Activated naive CD4-positive, alpha-beta T cell treated with anti-CD3 and anti-CD28 coated beads for 36 hours (primary cell): ENCODE measurements at regions of chr17 and their contacts with region 1.

Region 1: DNA sequence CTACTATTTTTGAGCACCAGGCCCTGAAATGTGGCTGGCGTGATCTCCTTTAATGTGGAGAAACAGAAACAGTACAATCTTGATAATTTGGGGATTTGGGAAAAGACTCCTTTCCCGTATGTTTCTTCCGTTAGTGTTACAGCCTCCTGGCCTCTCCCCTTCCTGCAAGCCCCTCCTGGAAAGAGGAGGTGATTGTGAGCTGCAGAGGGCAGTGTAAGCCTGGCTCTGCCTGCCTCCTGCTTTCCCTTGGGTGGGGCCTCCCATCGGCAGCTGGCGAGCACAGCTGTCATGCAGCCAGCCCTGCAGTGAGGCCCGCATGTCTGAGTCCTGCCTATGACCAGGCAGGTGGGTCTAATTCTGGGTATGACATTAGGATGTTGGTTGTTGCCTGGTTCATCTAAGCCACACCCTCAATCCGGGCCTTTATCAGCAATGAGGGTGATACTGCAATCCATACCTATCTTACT is 48.7 kb upstream of the WSB1 start:
- DNase-seq: peak; percentile 73
- H3K4me3 Mint-ChIP-seq: no peak overlapping the region
- H3K27ac Mint-ChIP-seq: no peak overlapping the region
- H3K4me1 Mint-ChIP-seq: no peaks in the 10 kb centered on the region
- H3K27me3 Mint-ChIP-seq: peaks cover 3% of the 10 kb centered on the region

Region 2: GRCh38 chr17:27293898-27294688 is 48.8 kb after region 1 on chr17 and contains the start of gene WSB1:
- CTCF ChIA-PET with region 1: no interaction called
- intact Hi-C with region 1: loop called (anchors 1 kb)
- DNase-seq: peak; percentile 91
- H3K4me3 Mint-ChIP-seq: peak within 1 kb of the TSS; percentile 96
- H3K27ac Mint-ChIP-seq: peak within 1 kb of the TSS; percentile 99
- H3K4me1 Mint-ChIP-seq: peaks cover 36% of the 10 kb centered on the region
- H3K27me3 Mint-ChIP-seq: no peaks in the 10 kb centered on the region
- total RNA-seq, gene WSB1: 112 to 118 TPM